ENCODE measurements at regions of chr21 and their contacts with region 1.

Region 1: DNA sequence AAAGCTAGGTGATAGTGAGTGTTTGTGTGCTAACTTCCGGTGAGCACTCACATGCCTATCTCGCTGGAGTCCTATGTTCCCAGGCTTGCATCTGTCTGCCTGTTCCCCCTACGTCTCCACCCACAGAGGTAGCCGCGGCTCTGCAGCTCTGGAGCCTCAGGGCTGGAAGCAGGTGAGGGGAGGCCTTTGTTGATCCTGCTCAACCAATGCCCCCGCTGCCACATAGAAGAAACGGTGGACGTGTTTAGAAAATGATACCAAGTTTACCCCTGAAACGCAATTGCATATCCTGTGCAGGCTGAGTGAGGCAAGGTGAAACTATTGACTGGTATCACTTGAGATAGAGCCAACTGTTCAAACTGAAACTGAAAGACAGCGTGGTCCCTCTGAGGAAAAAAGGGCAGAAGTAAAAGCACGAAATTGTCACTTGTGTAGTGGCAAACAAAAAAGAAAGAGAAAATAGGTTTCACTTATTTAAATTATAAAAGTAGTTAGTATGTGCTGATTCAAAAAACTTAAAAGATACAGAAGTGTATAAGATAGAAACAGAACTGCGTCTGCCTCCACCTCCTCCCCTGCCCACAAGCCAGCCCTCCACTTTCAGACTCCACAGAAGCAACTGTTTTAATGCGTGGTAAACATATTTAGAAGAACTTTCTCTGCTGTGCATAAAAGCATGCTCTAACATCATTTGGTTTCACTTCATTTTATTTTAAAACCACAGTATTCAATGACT is 38.6 kb upstream of the ETS2 start:
- DNase-seq: peak; percentile 80
- H3K4me3 Mint-ChIP-seq: peak overlapping the region; percentile 69
- H3K27ac Mint-ChIP-seq: peak overlapping the region; percentile 90
- H3K4me1 Mint-ChIP-seq: peaks cover 49% of the 10 kb centered on the region
- H3K27me3 Mint-ChIP-seq: peaks cover 9% of the 10 kb centered on the region

Region 2: GRCh38 chr21:38646213-38646837 is 120.8 kb before region 1 on chr21:
- CTCF ChIA-PET with region 1: no interaction called
- POLR2A ChIA-PET with region 1: no interaction called
- intact Hi-C with region 1: loop called (anchors 2 kb)
- DNase-seq: peak; percentile 43
- H3K4me3 Mint-ChIP-seq: no peak overlapping the region
- H3K27ac Mint-ChIP-seq: no peak overlapping the region
- H3K4me1 Mint-ChIP-seq: peaks cover 19% of the 10 kb centered on the region
- H3K27me3 Mint-ChIP-seq: peaks cover 32% of the 10 kb centered on the region

Region 3: GRCh38 chr21:38798481-38798882 is 31.3 kb after region 1 on chr21:
- CTCF ChIA-PET with region 1: interaction called, 22 read pairs
- POLR2A ChIA-PET with region 1: no interaction called
- intact Hi-C with region 1: loop called (anchors 1 kb)
- DNase-seq: peak; percentile 72
- H3K4me3 Mint-ChIP-seq: no peak overlapping the region
- H3K27ac Mint-ChIP-seq: peak overlapping the region; percentile 2
- H3K4me1 Mint-ChIP-seq: peaks cover 11% of the 10 kb centered on the region
- H3K27me3 Mint-ChIP-seq: peaks cover 8% of the 10 kb centered on the region

Region 4: DNA sequence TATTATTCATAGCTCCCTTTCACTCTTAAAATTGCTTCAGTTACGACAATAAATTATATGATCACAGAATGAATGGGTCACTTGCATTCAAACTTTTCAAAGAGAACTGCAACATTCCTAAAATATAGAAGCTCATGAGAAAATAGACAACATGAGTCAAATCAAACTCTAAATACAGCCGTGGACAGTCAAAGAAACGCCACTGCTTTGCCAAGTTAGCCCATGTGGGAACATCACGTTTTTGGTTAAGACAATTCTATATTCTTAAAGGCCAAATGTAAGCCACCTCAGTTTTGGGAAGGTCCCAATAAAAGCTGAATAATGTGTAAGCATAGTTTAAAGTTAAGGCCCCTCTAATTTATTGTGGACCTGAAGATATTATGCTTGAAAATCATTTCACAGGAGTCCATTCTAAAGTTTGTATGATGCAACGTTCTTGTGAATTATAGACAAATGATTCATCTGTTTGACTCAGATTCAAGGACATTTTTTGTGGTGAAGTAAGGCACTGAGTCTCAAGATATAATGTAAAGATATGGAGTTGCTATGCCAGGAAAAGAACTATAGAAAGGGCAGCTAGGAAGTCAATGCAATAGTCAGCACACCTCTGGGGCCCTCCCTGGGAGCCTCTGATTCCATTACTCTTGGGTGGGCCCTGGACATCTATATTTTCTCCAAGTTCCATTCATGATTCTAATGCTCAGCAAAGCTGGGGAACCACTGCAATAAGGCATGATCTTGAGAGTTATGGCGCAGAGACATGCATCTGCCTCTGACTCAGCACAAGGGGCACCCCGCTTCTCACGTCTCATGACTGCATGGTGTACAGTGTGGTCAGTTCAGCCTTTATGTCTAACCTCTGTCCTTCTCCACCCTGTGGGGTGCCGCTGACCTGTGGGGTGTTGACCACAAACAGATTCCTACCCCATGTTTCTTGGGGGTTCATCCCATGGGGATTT is 72.5 kb after region 1 on chr21:
- CTCF ChIA-PET with region 1: interaction called, 8 read pairs
- POLR2A ChIA-PET with region 1: no interaction called
- intact Hi-C with region 1: loop called (anchors 1 kb)
- DNase-seq: peak; percentile 46
- H3K4me3 Mint-ChIP-seq: no peak overlapping the region
- H3K27ac Mint-ChIP-seq: no peak overlapping the region
- H3K4me1 Mint-ChIP-seq: peaks cover 27% of the 10 kb centered on the region
- H3K27me3 Mint-ChIP-seq: peaks cover 6% of the 10 kb centered on the region

Region 5: GRCh38 chr21:39183237-39184007 is 416.3 kb after region 1 on chr21 and contains the start of gene PSMG1:
- CTCF ChIA-PET with region 1: no interaction called
- POLR2A ChIA-PET with region 1: interaction called, 5 read pairs
- intact Hi-C with region 1: loop called (anchors 1 kb)
- DNase-seq: peak; percentile 95
- H3K4me3 Mint-ChIP-seq: peak within 1 kb of the TSS; percentile 98
- H3K27ac Mint-ChIP-seq: peak within 1 kb of the TSS; percentile 94
- H3K4me1 Mint-ChIP-seq: peaks cover 63% of the 10 kb centered on the region
- H3K27me3 Mint-ChIP-seq: no peaks in the 10 kb centered on the region
- total RNA-seq, gene PSMG1: 82.3 to 85.9 TPM

Region 6: GRCh38 chr21:39349211-39350093 is 582.3 kb after region 1 on chr21:
- CTCF ChIA-PET with region 1: no interaction called
- POLR2A ChIA-PET with region 1: no interaction called
- intact Hi-C with region 1: loop called (anchors 1 kb)
- DNase-seq: peak; percentile 98
- H3K4me3 Mint-ChIP-seq: peak overlapping the region; percentile 98
- H3K27ac Mint-ChIP-seq: peak overlapping the region; percentile 100
- H3K4me1 Mint-ChIP-seq: peaks cover 31% of the 10 kb centered on the region
- H3K27me3 Mint-ChIP-seq: peaks cover 2% of the 10 kb centered on the region

Measured in activated CD4-positive, alpha-beta memory T cell treated with anti-CD3 and anti-CD28 coated beads for 36 hours (primary cell).